HAP-1 (cell line): ENCODE measurements at regions of chr1 and their contacts with region 1.

Region 1: GRCh38 chr1:53485478-53486394 is 26.5 kb downstream of the DMRTB1 start:
- DNase-seq: peak; percentile 70 to 91
- H3K4me3 ChIP-seq: no peak overlapping the region
- H3K4me1 ChIP-seq: peaks cover 3% of the 10 kb centered on the region; the same call in 1 of the 2 replicates
- H3K27me3 ChIP-seq: peaks cover 4% of the 10 kb centered on the region

Region 2: DNA sequence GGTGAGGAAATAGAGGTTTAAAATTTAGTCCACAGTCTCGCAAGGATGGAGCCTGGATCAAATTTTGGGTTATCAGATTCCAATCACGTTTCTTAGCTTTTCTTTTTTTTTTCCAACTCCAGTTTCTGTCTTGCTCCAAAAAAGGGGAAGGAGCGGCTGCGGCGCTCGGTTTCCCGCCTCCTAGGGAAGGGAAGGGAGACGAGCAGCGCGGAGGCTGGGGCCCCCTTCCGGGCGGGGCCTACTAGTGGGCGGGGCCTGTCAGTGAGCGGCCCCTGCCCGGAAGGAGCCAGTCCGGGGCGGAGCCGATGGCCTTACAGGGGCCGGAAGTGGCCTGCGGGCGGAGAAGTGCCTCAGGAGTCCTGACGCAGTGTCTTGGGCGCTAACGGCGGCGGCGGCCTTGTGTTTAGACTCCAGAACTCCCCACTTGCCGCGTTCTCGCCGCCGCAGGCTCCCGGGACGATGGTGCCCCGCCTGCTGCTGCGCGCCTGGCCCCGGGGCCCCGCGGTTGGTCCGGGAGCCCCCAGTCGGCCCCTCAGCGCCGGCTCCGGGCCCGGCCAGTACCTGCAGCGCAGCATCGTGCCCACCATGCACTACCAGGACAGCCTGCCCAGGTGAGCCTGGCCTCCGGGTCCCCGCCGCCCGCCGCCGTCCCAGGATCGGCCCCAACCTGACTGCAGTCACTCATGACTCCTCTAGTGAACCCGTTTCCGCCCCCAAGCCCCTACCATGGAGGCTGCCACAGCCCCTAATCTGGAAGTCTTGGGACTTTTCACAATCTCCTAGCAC is 289.1 kb before region 1 on chr1 and contains the start of gene CPT2:
- in situ Hi-C with region 1: no loop called
- DNase-seq: peak; percentile 88 to 96
- H3K4me3 ChIP-seq: peak within 1 kb of the TSS; percentile 61
- H3K4me1 ChIP-seq: peaks cover 8% of the 10 kb centered on the region
- H3K27me3 ChIP-seq: no peaks in the 10 kb centered on the region

Region 3: DNA sequence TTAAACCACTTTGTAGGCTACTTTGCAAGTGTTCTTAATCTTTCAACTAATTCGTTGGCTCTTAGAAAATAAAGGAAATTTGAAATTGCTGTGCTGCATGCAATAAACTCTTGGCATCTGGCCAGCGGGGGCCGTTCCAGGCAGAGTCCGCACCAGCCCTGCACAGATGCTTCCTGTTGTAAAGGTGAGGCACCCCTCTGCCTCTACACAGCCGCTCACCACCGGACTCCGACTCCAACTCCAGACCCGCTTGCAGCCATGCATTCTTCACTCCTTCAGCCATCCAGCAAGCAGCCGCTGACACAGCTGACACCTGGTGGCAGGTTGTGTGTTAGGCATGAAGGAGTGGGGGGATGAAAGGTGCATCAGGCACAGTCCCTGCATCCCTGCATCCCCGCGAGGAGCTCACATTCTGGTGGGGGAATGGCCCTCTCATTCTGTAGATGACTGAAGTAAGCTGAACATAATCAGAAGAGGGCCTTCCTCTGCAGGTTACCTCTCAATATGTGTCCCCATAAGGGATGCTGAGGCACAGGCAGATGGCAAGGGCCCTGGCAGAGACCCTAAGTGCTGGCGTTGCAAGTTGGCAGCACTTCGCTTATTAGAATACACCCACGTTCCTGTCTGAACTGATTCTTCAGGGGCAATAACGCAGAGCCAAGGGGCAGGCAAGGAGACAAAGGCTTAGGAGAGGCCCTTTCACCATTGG is 196.4 kb after region 1 on chr1:
- in situ Hi-C with region 1: loop called (anchors 25 kb)
- DNase-seq: peak; percentile 30 to 70
- H3K4me3 ChIP-seq: no peak overlapping the region
- H3K4me1 ChIP-seq: no peaks in the 10 kb centered on the region
- H3K27me3 ChIP-seq: peaks cover 13% of the 10 kb centered on the region

Region 4: DNA sequence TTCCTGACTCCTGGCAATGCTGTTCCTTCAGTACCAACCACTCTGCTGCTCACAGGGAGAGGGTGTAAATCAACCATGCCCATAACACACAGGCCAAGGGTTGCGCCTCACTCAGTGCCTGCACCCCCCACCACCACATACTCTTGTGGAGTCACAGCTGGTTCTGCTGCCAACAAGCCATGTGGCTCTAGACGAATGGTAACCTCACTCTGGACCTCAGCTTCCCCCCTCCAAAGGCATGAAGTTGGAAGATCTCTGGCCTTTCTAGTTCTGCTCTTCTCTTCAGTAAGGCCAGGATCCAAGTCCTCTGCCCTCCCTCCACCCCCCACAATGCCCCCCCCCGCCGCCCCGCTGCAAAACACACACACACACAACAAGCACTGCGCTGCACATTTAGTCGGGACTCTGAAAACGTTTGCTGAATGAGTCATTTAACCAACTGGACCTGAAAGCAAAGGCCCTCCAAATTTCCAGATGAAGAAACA is 254.9 kb after region 1 on chr1:
- in situ Hi-C with region 1: loop called (anchors 10 kb)
- DNase-seq: no peak
- H3K4me3 ChIP-seq: no peak overlapping the region
- H3K4me1 ChIP-seq: no peaks in the 10 kb centered on the region
- H3K27me3 ChIP-seq: peaks cover 24% of the 10 kb centered on the region

Region 5: DNA sequence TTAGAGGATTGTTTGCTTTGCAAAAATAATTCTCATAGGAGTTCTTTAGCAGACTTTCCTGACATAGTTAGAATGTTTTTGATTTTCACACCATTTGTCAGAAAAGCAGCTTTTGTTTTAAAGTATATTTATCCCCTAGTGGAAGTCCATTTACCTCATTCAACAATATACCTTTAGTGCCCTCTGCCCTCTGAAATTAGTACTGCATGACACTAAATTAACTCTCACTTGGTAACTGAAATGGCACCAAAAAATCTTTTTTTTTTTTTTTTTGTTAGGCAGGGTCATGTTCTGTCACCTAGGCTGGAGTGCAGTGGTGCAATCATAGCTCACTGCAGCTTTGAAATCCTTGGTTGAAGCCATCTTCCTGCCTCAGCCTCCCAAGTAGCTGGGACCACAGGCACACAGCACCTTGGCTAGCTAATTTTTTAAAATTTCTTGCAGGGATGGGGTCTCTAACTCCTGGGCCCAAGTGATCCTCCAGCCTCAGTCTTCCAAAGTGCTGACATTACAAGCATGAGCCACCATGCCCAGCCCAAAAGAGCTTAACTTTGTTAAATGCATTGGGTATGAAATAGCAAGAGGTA is 474.0 kb after region 1 on chr1:
- in situ Hi-C with region 1: loop called (anchors 25 kb)
- DNase-seq: no peak
- H3K4me3 ChIP-seq: no peak overlapping the region
- H3K4me1 ChIP-seq: peaks cover 27% of the 10 kb centered on the region
- H3K27me3 ChIP-seq: no peaks in the 10 kb centered on the region